ENCODE measurements at regions of chr10 and their contacts with region 1.

Region 1: DNA sequence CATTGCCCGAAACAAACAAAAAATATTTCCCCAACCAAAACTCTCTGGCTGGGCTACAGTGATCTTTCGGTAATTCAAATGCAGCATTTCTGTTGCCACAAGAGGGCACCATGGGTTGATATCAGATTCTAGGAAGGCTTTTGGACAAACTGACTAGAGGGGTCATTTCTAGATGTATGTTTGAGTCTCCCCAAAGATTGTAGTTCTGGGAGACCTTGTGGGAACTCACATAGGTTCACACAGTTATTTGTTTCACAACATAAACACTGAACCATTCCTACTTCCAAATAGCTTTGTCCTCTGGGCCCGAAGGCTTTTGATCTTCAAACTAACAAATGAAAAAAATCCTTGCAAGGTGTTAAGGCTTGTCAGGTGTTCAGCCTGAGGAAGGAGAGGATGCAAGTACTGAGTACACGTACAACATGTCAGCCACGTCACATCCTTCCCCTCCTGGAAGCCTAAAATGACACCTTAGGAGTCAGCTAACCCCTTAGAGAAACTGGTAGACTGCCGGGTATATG is 37.0 kb upstream of the IL15RA start:
- DNase-seq: peak; percentile 24 to 29
- ATAC-seq: peak; percentile 60 to 66
- H3K4me3 ChIP-seq: peak overlapping the region in 1 of 4 donors; percentile 6
- H3K27ac ChIP-seq: no peak overlapping the region
- H3K4me1 ChIP-seq: no peaks in the 10 kb centered on the region
- H3K27me3 ChIP-seq: peaks cover 0 to 3% (median 0%) of the 10 kb centered on the region in 3 donors
- CTCF ChIP-seq: peak; percentile 43 to 75 (median 52)
- POLR2A ChIP-seq: no peak

Region 2: GRCh38 chr10:6088721-6089390 is 74.6 kb after region 1 on chr10 and contains the start of gene RBM17:
- in situ Hi-C with region 1: loop called in 2 of 4 experiments (anchors 5 to 10 kb)
- intact Hi-C with region 1: no loop called
- DNase-seq: peak; percentile 92 to 96
- ATAC-seq: peak; percentile 86 to 91
- H3K4me3 ChIP-seq: peak within 1 kb of the TSS; percentile 83 to 94 (median 88)
- H3K27ac ChIP-seq: peak within 1 kb of the TSS; percentile 78 to 96 (median 82)
- H3K4me1 ChIP-seq: peaks cover 39 to 48% of the 10 kb centered on the region in 2 donors
- H3K27me3 ChIP-seq: peaks cover 0 to 5% (median 0%) of the 10 kb centered on the region in 3 donors
- CTCF ChIP-seq: peak; percentile 99 to 100 (median 100)
- POLR2A ChIP-seq: peak; percentile 83 to 87
- total RNA-seq, gene RBM17: 53.2 to 67.4 (median 60.1) TPM

Measured in gastrocnemius medialis (tissue), 4 donors.